ENCODE measurements at regions of chr22 and their contacts with region 1.

Region 1: DNA sequence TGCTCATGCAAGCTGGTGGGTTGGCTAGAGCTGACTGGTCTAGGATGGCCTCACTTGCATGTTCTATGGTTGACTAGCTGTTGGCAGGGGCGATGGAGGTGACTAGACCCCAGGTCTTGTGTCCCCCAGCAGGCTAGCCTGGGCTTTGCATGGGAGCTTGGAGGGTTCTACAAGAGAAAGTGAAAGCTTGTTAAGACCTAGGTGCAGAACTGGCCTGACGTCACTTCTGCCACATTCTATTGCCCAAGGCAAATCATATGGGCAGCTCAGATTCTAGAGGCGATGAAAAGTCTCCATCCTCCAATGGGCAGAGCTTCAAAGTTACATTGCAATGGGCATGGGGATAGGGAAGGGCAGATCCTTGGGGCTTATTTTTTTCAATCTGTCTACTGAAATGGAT is 170.9 kb downstream of the MIAT start:
- DNase-seq: no peak
- H3K4me3 ChIP-seq: no peak overlapping the region
- H3K27ac ChIP-seq: no peak overlapping the region
- H3K4me1 ChIP-seq: no peaks in the 10 kb centered on the region
- H3K27me3 ChIP-seq: no peaks in the 10 kb centered on the region
- CTCF ChIP-seq: no peak
- EP300 ChIP-seq: no peak
- POLR2A ChIP-seq: no peak

Region 2: DNA sequence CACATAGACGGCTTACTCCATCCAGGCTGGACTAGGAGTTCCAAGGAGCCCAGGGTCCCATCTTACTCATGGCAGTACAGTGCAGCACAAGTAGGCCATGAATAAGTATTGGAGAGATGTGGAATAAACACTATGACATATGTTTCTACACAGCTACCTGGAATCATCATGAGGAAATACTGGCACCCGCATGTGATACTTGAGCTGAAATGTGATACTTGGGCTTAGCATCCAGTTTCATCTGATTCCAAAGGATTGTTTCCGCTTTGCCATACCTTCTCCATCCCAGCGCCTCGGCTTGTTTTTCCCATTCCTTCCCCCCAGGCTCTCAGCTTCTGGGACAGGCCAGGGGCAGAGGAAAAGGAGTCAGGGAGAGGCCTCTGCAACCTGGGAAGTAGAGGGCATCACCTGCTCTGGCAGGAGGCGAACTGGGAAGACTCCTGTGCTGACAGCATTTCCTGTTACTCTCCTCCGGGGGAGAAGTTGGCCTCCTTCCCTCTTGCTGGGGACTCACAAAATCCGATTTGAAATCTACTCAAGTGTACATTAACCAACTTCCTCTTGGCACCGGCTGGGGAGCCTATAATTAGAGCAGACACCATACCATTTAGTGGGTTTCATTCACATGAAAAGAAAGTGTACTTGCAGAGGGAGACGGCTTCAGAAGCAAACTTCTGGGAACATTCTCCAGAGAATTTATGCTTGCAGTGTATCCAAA is 16.9 kb after region 1 on chr22:
- intact Hi-C with region 1: loop called in 1 of 4 experiments (anchors 1 kb)
- DNase-seq: no peak
- H3K4me3 ChIP-seq: no peak overlapping the region
- H3K27ac ChIP-seq: no peak overlapping the region
- H3K4me1 ChIP-seq: no peaks in the 10 kb centered on the region
- H3K27me3 ChIP-seq: no peaks in the 10 kb centered on the region
- CTCF ChIP-seq: no peak
- EP300 ChIP-seq: no peak
- POLR2A ChIP-seq: no peak